T-cell (primary cell): ENCODE measurements at regions of chr6 and their contacts with region 1.

Region 1: DNA sequence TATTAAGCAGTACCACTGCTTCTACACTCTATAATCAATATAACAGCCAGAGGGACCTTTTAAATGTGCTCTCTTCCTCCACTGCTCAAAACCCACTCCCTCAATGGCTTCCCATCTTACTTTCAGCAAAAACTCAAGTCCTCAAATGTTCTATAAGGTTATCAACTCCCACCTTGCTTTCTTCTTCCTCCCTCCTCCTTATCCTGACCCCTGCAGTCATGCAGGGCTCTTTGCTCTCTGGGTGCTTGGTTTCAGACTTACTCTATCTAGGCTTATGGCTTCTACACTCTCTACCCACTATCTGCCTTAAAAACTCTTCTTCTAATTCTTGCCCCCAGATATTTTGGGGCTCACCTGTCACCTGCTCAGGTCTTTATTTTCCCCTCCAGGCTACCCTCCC is 5.3 kb downstream of the ARHGAP18 start:
- DNase-seq: no peak
- ATAC-seq: no peak
- H3K4me3 ChIP-seq: no peak overlapping the region
- H3K4me3 Mint-ChIP-seq: no peak overlapping the region
- H3K27ac ChIP-seq: no peak overlapping the region
- H3K27ac Mint-ChIP-seq: no peak overlapping the region
- H3K4me1 ChIP-seq: peaks cover 0 to 18% of the 10 kb centered on the region in 2 experiments
- H3K4me1 Mint-ChIP-seq: peaks cover 22 to 38% (median 24%) of the 10 kb centered on the region in 3 donors
- H3K27me3 ChIP-seq: no peaks in the 10 kb centered on the region
- H3K27me3 Mint-ChIP-seq: no peaks in the 10 kb centered on the region

Region 2: GRCh38 chr6:128024969-128025368 is 1679.7 kb before region 1 on chr6:
- CTCF ChIA-PET with region 1: no interaction called
- POLR2A ChIA-PET with region 1: no interaction called
- DNase-seq: no peak
- ATAC-seq: no peak
- H3K4me3 ChIP-seq: no peak overlapping the region
- H3K4me3 Mint-ChIP-seq: no peak overlapping the region
- H3K27ac ChIP-seq: no peak overlapping the region
- H3K27ac Mint-ChIP-seq: no peak overlapping the region
- H3K4me1 ChIP-seq: peaks cover 0 to 8% of the 10 kb centered on the region in 2 experiments
- H3K4me1 Mint-ChIP-seq: peaks cover 14 to 28% (median 20%) of the 10 kb centered on the region in 3 donors
- H3K27me3 ChIP-seq: no peaks in the 10 kb centered on the region
- H3K27me3 Mint-ChIP-seq: no peaks in the 10 kb centered on the region

Region 3: GRCh38 chr6:128508588-128509296 is 1196.0 kb before region 1 on chr6:
- CTCF ChIA-PET with region 1: interaction called in 1 of 2 experiments, 10 read pairs
- POLR2A ChIA-PET with region 1: no interaction called
- DNase-seq: no peak
- ATAC-seq: no peak
- H3K4me3 ChIP-seq: no peak overlapping the region
- H3K4me3 Mint-ChIP-seq: no peak overlapping the region
- H3K27ac ChIP-seq: no peak overlapping the region
- H3K27ac Mint-ChIP-seq: no peak overlapping the region
- H3K4me1 ChIP-seq: no peaks in the 10 kb centered on the region
- H3K4me1 Mint-ChIP-seq: no peaks in the 10 kb centered on the region
- H3K27me3 ChIP-seq: peaks cover 0 to 3% of the 10 kb centered on the region in 2 experiments
- H3K27me3 Mint-ChIP-seq: peaks cover 9 to 13% of the 10 kb centered on the region in 2 donors

Region 4: DNA sequence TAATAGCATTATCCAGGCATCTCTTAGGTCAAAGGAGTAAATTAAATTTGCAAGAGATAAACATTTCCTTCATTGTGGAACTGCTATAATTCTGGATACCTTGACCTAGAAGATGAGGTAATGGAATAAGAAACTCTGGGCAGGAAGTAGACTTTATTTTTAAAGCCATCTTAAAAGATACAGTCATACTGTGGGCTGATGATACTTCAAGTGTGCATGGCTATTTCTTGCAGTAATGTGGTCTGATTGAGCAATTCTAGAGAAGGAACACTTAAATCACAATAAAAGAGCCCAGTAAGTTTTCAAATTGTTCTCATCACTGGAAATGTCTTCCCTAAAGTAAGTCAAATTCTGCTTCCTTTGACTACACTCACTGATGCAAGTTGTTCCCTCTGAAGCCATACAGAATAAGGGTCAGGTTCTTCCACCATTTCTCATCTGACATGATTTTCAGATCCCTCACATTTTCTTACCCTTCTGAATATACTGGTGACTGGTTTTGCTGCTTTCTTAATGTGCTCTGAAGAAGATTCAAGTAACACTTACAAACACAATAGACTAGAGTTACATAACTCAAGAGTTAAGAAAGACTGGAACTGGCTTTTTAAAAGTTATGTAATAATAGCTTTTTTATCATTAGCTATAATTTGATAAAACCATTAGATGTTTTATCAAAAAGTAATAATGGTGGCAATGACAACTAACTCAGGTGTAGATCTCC is 219.0 kb after region 1 on chr6:
- CTCF ChIA-PET with region 1: no interaction called
- POLR2A ChIA-PET with region 1: no interaction called
- DNase-seq: no peak
- ATAC-seq: no peak
- H3K4me3 ChIP-seq: no peak overlapping the region
- H3K4me3 Mint-ChIP-seq: no peak overlapping the region
- H3K27ac ChIP-seq: no peak overlapping the region
- H3K27ac Mint-ChIP-seq: no peak overlapping the region
- H3K4me1 ChIP-seq: no peaks in the 10 kb centered on the region
- H3K4me1 Mint-ChIP-seq: no peaks in the 10 kb centered on the region
- H3K27me3 ChIP-seq: no peaks in the 10 kb centered on the region
- H3K27me3 Mint-ChIP-seq: peaks cover 0 to 2% of the 10 kb centered on the region in 2 donors

Region 5: DNA sequence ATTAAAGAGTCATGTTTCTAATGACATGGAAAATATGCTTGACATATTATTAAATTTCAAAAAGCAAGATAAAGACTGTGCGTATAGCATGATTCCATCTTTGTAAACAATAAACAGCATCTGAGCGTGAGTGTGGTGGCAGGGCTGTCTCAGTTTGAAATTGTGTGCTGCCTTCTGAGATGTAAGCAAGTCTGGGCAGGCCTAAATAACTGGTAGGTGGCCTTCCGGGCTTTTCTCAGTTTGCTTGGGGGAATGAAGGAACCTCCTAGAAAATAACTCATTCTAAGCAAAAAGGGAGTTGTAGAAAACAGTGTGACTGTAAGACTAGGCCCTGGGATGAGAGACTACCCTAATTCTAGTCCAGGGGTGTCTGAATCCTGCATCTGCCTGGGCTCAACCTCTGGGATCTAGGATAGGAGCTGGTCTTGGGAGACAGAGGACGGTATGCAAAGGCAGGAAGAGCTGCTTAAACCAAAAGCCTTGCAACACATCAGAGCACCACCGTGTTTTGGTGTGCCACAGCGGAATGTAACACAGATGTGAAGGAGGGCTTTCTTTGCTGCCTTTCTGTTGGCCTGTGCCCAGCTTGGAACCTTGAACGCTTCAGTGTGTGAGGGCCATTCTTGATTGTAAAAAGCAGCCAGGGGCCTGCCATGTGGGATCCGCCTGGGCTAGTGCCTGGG is 250.2 kb after region 1 on chr6:
- CTCF ChIA-PET with region 1: no interaction called
- POLR2A ChIA-PET with region 1: no interaction called
- DNase-seq: no peak
- ATAC-seq: no peak
- H3K4me3 ChIP-seq: no peak overlapping the region
- H3K4me3 Mint-ChIP-seq: no peak overlapping the region
- H3K27ac ChIP-seq: no peak overlapping the region
- H3K27ac Mint-ChIP-seq: no peak overlapping the region
- H3K4me1 ChIP-seq: no peaks in the 10 kb centered on the region
- H3K4me1 Mint-ChIP-seq: no peaks in the 10 kb centered on the region
- H3K27me3 ChIP-seq: no peaks in the 10 kb centered on the region
- H3K27me3 Mint-ChIP-seq: peaks cover 0 to 4% of the 10 kb centered on the region in 2 donors